Dorsolateral prefrontal cortex (tissue), 120 donors: ENCODE measurements at regions of chr9 and their contacts with region 1.

Region 1: DNA sequence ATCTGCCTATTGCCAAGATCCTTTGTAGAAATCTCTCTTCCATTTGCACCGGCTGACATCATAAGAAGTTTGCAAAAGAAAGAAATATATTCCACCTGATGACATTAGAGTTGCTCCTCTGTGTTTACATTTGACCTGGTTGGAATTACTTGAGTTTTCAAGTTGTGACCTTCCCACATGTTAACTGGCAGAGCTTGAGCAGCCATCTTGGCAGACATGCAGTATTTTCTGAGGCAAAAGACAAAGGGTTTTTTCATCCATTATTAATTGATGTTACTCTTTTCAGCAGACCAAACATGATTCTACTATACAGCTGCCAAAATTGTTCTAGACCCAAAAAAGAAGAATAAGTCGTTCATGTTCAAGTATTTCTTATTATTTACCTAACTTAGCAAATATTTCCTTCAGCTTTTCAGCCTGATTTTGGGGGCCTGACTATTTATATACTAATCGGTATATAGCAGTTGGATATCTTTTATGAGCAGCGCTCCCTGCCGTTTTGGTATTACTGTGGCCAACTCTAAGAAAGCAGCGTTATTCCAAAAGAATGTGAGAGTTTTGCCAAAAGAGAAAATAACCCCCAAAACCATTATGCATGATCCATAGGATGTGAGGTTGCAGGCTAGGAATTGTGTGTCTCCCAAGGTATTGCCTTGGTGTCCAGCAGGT is 212.9 kb downstream of the PBX3 start:
- DNase-seq: no peak
- H3K4me3 ChIP-seq: peak overlapping the region in 40 of 59 donors; percentile 0 to 52 (median 26)
- H3K27ac ChIP-seq: peak overlapping the region in 32 of 59 donors; percentile 2 to 80 (median 40)
- H3K27me3 ChIP-seq: no peaks in the 10 kb centered on the region
- CTCF ChIP-seq: peak in 18 of 56 donors; percentile 13 to 57 (median 22)

Region 2: GRCh38 chr9:126125177-126125972 is 165.3 kb after region 1 on chr9:
- intact Hi-C with region 1: no loop called
- DNase-seq: no peak
- H3K4me3 ChIP-seq: no peak overlapping the region
- H3K27ac ChIP-seq: no peak overlapping the region
- H3K27me3 ChIP-seq: peaks cover 0 to 11% (median 0%) of the 10 kb centered on the region in 45 donors
- CTCF ChIP-seq: no peak

Region 3: DNA sequence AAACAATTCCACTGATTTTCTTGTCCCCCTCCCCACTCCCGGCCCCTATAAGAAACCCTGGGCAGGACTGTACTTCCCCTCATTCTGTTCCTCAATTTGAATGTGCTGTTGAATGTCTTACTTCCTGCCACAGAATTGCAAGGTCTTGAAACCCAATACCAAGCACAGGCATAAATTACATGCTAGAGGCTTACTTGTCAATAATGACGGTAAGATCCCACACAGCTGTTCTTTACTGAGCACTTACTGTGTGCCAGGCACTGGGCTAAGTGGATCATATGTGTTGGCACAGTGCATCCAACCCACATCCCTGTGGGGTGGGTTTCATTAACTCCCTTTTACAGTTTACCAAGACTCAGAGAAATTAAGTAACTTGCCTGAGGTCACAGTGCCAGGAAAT is 429.9 kb after region 1 on chr9:
- intact Hi-C with region 1: loop called in 1 of 2 experiments (anchors 5 kb)
- DNase-seq: no peak
- H3K4me3 ChIP-seq: no peak overlapping the region
- H3K27ac ChIP-seq: peak overlapping the region in 55 of 59 donors; percentile 2 to 99 (median 79)
- H3K27me3 ChIP-seq: no peaks in the 10 kb centered on the region
- CTCF ChIP-seq: no peak